Naive thymus-derived CD4-positive, alpha-beta T cell (primary cell): ENCODE measurements at regions of chr7 and their contacts with region 1.

Region 1: DNA sequence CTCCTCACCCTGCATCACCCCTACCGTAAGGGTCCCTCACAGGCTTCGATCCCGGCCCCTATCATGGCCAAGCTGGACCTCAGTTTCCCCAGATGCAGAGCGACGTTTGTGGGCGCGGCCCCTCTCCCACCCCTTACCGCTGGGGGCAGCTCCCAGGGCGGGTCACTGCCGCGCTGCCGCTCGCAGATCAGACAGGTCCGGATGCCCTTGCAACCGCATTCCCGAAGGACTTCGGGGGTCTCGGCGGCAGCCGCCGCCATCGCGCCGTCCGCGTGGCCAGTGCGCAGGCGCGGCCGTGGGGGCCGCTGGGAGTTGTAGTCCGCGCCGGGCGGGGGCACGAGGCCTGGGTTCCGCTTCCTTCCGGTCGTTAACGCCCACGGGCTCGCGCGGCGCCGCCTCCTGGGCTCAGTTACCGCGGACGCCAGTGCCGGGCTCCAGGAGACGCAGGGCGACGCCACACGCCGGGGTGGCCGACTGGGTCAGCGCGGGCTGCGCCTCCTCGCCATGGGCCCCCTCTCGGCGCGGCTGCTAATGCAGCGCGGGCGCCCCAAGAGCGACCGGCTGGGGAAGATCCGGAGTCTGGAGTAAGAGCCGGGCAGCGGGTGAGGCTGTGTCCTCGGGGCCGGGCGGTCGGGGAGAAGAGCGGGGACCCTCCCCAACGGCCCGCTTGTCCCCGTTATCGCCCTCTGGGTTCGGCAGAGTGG is at the starts of genes ALKBH4 and LRWD1:
- DNase-seq: peak; percentile 84 to 99 (median 91)
- ATAC-seq: peak; percentile 99
- H3K4me3 ChIP-seq: peak within 1 kb of the TSS; percentile 99
- H3K4me3 Mint-ChIP-seq: peak within 1 kb of the TSS; percentile 82 to 95 (median 90)
- H3K27ac ChIP-seq: peak within 1 kb of the TSS; percentile 84
- H3K27ac Mint-ChIP-seq: peak within 1 kb of the TSS; percentile 54 to 90 (median 79)
- H3K4me1 ChIP-seq: peaks cover 19 to 22% of the 10 kb centered on the region in 2 donors
- H3K4me1 Mint-ChIP-seq: peaks cover 20 to 46% (median 37%) of the 10 kb centered on the region in 7 donors
- H3K27me3 ChIP-seq: no peaks in the 10 kb centered on the region
- H3K27me3 Mint-ChIP-seq: no peaks in the 10 kb centered on the region
- total RNA-seq, gene ALKBH4: 4.0 to 14.3 (median 10.1) TPM
- total RNA-seq, gene LRWD1: 12.4 to 25.3 (median 24.7) TPM

Region 2: GRCh38 chr7:102248456-102249395 is 216.0 kb before region 1 on chr7:
- CTCF ChIA-PET with region 1: no interaction called
- POLR2A ChIA-PET with region 1: no interaction called
- intact Hi-C with region 1: no loop called
- DNase-seq: no peak
- ATAC-seq: no peak
- H3K4me3 ChIP-seq: no peak overlapping the region
- H3K4me3 Mint-ChIP-seq: no peak overlapping the region
- H3K27ac ChIP-seq: no peak overlapping the region
- H3K27ac Mint-ChIP-seq: no peak overlapping the region
- H3K4me1 ChIP-seq: no peaks in the 10 kb centered on the region
- H3K4me1 Mint-ChIP-seq: peaks cover 0 to 5% (median 0%) of the 10 kb centered on the region in 7 donors
- H3K27me3 ChIP-seq: no peaks in the 10 kb centered on the region
- H3K27me3 Mint-ChIP-seq: no peaks in the 10 kb centered on the region

Region 3: DNA sequence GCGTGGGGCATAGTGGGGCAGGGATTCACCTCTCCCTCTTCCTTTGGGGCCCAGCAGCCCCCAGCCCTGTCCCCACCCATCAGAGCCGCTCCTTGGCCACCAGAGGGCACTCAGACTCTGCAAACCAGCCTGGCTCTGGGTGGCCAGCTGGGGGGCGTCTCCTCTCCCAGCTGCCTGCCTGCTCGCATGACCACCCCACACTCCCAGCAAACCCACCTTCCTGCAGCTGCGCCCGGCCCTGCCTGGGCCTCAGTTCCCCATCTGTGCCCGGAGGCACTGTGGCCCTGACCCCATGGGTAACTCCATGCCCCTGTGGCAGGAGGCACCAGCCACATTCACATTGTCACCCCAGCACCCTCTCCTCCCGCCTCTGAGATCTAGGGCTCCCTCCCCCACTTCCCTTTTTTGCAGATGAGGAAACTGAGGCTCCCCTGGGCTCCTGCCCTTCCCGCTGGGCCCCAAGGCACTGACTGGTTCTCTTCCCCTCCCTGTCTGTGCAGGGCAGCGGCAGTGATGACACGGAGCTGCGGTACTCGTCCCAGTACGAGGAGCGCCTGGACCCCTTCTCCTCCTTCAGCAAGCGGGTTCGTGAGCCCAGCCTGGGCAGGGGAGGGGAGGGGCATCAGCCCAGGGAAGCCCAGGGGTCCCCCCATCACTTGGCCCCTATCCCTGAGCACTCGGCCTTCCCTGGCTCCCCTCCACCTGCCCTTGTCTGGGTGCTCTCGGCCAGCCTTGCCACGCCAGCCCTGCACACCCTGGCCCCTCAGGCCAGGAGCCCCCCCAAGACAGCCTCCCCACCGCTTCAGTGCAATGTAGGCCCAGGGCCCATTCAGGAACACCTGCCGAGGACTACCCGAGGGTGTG is 185.0 kb before region 1 on chr7:
- CTCF ChIA-PET with region 1: no interaction called
- POLR2A ChIA-PET with region 1: no interaction called
- intact Hi-C with region 1: loop called (anchors 5 to 10 kb)
- DNase-seq: peak; percentile 35 to 63 (median 54)
- ATAC-seq: peak; percentile 87
- H3K4me3 ChIP-seq: no peak overlapping the region
- H3K4me3 Mint-ChIP-seq: no peak overlapping the region
- H3K27ac ChIP-seq: no peak overlapping the region
- H3K27ac Mint-ChIP-seq: peak overlapping the region in 1 of 9 donors; percentile 17
- H3K4me1 ChIP-seq: peaks cover 3 to 5% of the 10 kb centered on the region in 2 donors
- H3K4me1 Mint-ChIP-seq: peaks cover 4 to 15% (median 4%) of the 10 kb centered on the region in 7 donors
- H3K27me3 ChIP-seq: no peaks in the 10 kb centered on the region
- H3K27me3 Mint-ChIP-seq: peaks cover 0 to 7% (median 0%) of the 10 kb centered on the region in 5 donors

Region 4: GRCh38 chr7:102396027-102397019 is 68.4 kb before region 1 on chr7 and contains the start of gene PRKRIP1:
- CTCF ChIA-PET with region 1: interaction called, 4 read pairs
- POLR2A ChIA-PET with region 1: interaction called, 6 read pairs
- intact Hi-C with region 1: loop called (anchors 1 to 2 kb)
- DNase-seq: peak; percentile 58 to 95 (median 89)
- ATAC-seq: peak; percentile 99
- H3K4me3 ChIP-seq: peak within 1 kb of the TSS; percentile 92
- H3K4me3 Mint-ChIP-seq: peak within 1 kb of the TSS; percentile 89 to 98 (median 96)
- H3K27ac ChIP-seq: peak within 1 kb of the TSS; percentile 86
- H3K27ac Mint-ChIP-seq: peak within 1 kb of the TSS; percentile 87 to 99 (median 98)
- H3K4me1 ChIP-seq: peaks cover 9 to 15% of the 10 kb centered on the region in 2 donors
- H3K4me1 Mint-ChIP-seq: peaks cover 12 to 35% (median 22%) of the 10 kb centered on the region in 7 donors
- H3K27me3 ChIP-seq: no peaks in the 10 kb centered on the region
- H3K27me3 Mint-ChIP-seq: no peaks in the 10 kb centered on the region
- total RNA-seq, gene PRKRIP1: 36.4 to 58.4 (median 47.0) TPM

Region 5: DNA sequence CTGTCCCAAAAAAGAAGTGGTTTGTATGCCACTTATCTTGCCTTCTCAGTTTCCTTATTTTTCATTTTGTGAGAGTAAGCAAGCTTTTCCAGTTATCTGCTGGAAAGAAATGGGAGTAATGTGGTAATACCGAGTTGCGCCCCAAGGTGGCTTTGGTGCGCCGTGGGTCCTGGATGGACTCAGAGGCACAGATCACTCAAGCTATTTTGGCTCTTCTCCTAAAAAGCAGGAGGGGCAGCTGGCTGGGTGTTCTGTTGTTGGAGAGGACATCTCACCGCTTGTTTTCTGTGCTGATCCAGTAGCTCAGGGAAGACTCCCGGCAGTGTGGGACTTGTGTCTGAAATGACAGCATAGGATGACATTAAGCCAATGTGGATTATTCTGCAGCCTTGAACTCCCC is 52.2 kb before region 1 on chr7:
- CTCF ChIA-PET with region 1: interaction called, 21 read pairs
- POLR2A ChIA-PET with region 1: interaction called, 21 read pairs
- intact Hi-C with region 1: loop called in 1 of 2 experiments (anchors 1 kb)
- DNase-seq: peak in 7 of 9 donors; percentile 35 to 67 (median 56)
- ATAC-seq: peak; percentile 49
- H3K4me3 ChIP-seq: no peak overlapping the region
- H3K4me3 Mint-ChIP-seq: no peak overlapping the region
- H3K27ac ChIP-seq: peak overlapping the region; percentile 27
- H3K27ac Mint-ChIP-seq: peak overlapping the region in 8 of 9 donors; percentile 5 to 96 (median 58)
- H3K4me1 ChIP-seq: peaks cover 28 to 32% of the 10 kb centered on the region in 2 donors
- H3K4me1 Mint-ChIP-seq: peaks cover 25 to 48% (median 44%) of the 10 kb centered on the region in 7 donors
- H3K27me3 ChIP-seq: no peaks in the 10 kb centered on the region
- H3K27me3 Mint-ChIP-seq: no peaks in the 10 kb centered on the region

Region 6: DNA sequence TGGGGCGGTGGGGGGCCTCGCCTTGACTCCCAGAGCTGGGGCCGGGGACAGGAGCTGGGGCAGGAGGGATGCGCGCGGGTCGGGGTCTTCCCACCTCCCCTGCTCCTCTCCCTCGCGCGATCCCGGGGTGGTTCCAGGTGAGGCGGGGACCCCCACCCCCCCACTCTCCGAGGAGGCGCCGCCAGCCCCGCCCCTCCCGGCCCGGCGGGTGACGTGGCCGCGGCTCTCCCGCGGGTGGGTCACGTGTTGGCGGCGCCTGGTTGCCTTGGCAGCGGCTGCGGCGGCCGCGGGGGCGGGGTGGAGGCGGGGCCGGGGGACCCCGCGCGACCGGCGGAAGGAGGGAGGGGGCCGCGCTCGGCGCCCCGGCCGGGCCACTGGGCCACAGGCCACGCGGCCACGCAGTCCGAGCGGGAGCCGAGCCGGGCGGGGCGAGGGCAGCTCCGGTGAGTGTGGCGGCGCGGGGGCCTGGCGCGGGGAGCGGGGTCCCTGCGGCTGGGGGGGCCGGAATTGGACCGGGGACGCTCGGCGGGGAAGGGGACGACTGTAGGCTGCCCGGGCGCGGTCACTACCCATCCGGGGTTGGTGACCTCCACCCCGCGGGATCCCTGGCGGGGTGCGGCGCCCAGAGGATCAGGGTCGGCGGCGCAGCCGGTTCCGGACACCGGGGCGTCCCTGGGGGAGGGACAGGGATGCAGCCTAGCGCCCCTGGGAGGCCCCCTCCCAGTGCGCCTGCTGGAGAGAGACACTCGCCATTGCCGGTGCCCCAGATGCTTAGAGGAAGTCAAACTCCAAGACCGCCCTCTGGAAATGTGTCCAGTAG is 31.3 kb before region 1 on chr7 and contains the start of gene ORAI2:
- CTCF ChIA-PET with region 1: interaction called, 3 read pairs
- POLR2A ChIA-PET with region 1: interaction called, 9 read pairs
- intact Hi-C with region 1: loop called (anchors 2 kb)
- DNase-seq: peak; percentile 72 to 94 (median 81)
- ATAC-seq: peak; percentile 86
- H3K4me3 ChIP-seq: peak within 1 kb of the TSS; percentile 59
- H3K4me3 Mint-ChIP-seq: peak within 1 kb of the TSS; percentile 76 to 91 (median 88)
- H3K27ac ChIP-seq: peak within 1 kb of the TSS; percentile 96
- H3K27ac Mint-ChIP-seq: peak within 1 kb of the TSS; percentile 97 to 100 (median 99)
- H3K4me1 ChIP-seq: peaks cover 34 to 55% of the 10 kb centered on the region in 2 donors
- H3K4me1 Mint-ChIP-seq: peaks cover 38 to 62% (median 49%) of the 10 kb centered on the region in 7 donors
- H3K27me3 ChIP-seq: no peaks in the 10 kb centered on the region
- H3K27me3 Mint-ChIP-seq: no peaks in the 10 kb centered on the region
- total RNA-seq, gene ORAI2: 19.9 to 72.6 (median 26.2) TPM